ENCODE measurements at regions of chr1 and their contacts with region 1.

Region 1: GRCh38 chr1:182084487-182085316 is 23.2 kb upstream of the ZNF648 start:
- DNase-seq: peak; percentile 63 to 82
- ATAC-seq: peak; percentile 92 to 96
- H3K4me3 ChIP-seq: no peak overlapping the region
- H3K27ac ChIP-seq: peak overlapping the region in 2 of 4 donors; percentile 12 to 50
- H3K4me1 ChIP-seq: peaks cover 0 to 3% of the 10 kb centered on the region in 2 donors
- H3K27me3 ChIP-seq: no peaks in the 10 kb centered on the region
- CTCF ChIP-seq: peak; percentile 80 to 97 (median 89)
- POLR2A ChIP-seq: no peak

Region 2: GRCh38 chr1:182143154-182143657 is 58.5 kb after region 1 on chr1:
- in situ Hi-C with region 1: loop called in 1 of 4 experiments (anchors 10 kb)
- intact Hi-C with region 1: loop called (anchors 1 kb)
- DNase-seq: peak; percentile 89 to 91
- ATAC-seq: peak; percentile 62 to 72
- H3K4me3 ChIP-seq: no peak overlapping the region
- H3K27ac ChIP-seq: peak overlapping the region; percentile 94 to 98 (median 96)
- H3K4me1 ChIP-seq: peaks cover 27 to 28% of the 10 kb centered on the region in 2 donors
- H3K27me3 ChIP-seq: no peaks in the 10 kb centered on the region
- CTCF ChIP-seq: peak; percentile 96 to 99 (median 98)
- POLR2A ChIP-seq: no peak

Region 3: DNA sequence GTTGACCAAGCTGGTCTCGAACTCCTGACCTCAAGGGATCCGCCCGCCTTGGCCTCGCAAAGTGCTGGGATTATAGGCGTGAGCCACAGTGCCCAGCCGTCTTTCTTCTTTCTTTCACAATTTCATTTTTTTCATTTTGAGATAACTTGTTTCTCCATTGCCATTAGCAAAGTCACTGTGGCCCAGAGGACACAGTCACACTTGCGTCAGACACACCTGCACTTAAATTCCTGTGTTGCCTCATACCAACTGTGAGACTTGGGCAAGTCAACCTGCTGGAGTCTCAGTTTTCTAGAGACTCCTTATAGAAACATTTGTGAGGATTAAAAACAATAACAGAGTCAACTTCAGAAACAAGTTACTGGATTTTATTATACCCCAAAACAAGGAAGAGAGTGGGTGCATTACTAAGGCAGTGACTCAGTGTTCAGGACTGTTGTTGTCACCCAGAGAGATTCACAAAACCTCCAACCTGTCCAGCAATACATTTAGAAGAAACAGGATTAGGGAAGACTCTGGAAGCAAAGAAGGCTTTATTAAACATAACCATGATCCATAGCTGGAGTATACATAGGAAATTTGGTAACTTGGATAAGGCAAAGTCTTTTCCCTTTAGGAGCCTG is 313.2 kb after region 1 on chr1:
- in situ Hi-C with region 1: loop called (anchors 5 kb)
- intact Hi-C with region 1: loop called (anchors 1 kb)
- DNase-seq: peak in 1 of 2 donors; percentile 58
- ATAC-seq: peak; percentile 34 to 66
- H3K4me3 ChIP-seq: no peak overlapping the region
- H3K27ac ChIP-seq: peak overlapping the region; percentile 57 to 73 (median 72)
- H3K4me1 ChIP-seq: peaks cover 21 to 25% of the 10 kb centered on the region in 2 donors
- H3K27me3 ChIP-seq: no peaks in the 10 kb centered on the region
- CTCF ChIP-seq: no peak
- POLR2A ChIP-seq: no peak

Region 4: GRCh38 chr1:182446033-182446669 is 361.4 kb after region 1 on chr1:
- in situ Hi-C with region 1: no loop called
- intact Hi-C with region 1: loop called (anchors 5 kb)
- DNase-seq: no peak
- ATAC-seq: peak in 1 of 2 donors; percentile 55
- H3K4me3 ChIP-seq: no peak overlapping the region
- H3K27ac ChIP-seq: no peak overlapping the region
- H3K4me1 ChIP-seq: no peaks in the 10 kb centered on the region
- H3K27me3 ChIP-seq: no peaks in the 10 kb centered on the region
- CTCF ChIP-seq: peak in 4 of 5 experiments; percentile 25 to 63 (median 56)
- POLR2A ChIP-seq: no peak

Region 5: GRCh38 chr1:182595641-182596240 is 511.0 kb after region 1 on chr1:
- in situ Hi-C with region 1: loop called in 3 of 4 experiments (anchors 10 to 25 kb)
- intact Hi-C with region 1: loop called (anchors 5 kb)
- DNase-seq: peak; percentile 33 to 51
- ATAC-seq: peak; percentile 58 to 78
- H3K4me3 ChIP-seq: no peak overlapping the region
- H3K27ac ChIP-seq: no peak overlapping the region
- H3K4me1 ChIP-seq: peaks cover 1 to 4% of the 10 kb centered on the region in 2 donors
- H3K27me3 ChIP-seq: no peaks in the 10 kb centered on the region
- CTCF ChIP-seq: peak; percentile 47 to 80 (median 69)
- POLR2A ChIP-seq: no peak

Region 6: GRCh38 chr1:182781841-182782586 is 697.3 kb after region 1 on chr1:
- in situ Hi-C with region 1: loop called (anchors 5 to 25 kb)
- intact Hi-C with region 1: loop called (anchors 5 kb)
- DNase-seq: peak; percentile 40 to 62
- ATAC-seq: peak; percentile 61 to 75
- H3K4me3 ChIP-seq: no peak overlapping the region
- H3K27ac ChIP-seq: no peak overlapping the region
- H3K4me1 ChIP-seq: no peaks in the 10 kb centered on the region
- H3K27me3 ChIP-seq: no peaks in the 10 kb centered on the region
- CTCF ChIP-seq: peak; percentile 32 to 80 (median 71)
- POLR2A ChIP-seq: no peak